ENCODE measurements at regions of chr15 and their contacts with region 1.

Region 1: GRCh38 chr15:82999905-83000671 is 11.4 kb downstream of the C15orf40 start:
- DNase-seq: no peak
- H3K4me3 ChIP-seq: peak overlapping the region; percentile 39
- CTCF ChIP-seq: peak; percentile 25

Region 2: DNA sequence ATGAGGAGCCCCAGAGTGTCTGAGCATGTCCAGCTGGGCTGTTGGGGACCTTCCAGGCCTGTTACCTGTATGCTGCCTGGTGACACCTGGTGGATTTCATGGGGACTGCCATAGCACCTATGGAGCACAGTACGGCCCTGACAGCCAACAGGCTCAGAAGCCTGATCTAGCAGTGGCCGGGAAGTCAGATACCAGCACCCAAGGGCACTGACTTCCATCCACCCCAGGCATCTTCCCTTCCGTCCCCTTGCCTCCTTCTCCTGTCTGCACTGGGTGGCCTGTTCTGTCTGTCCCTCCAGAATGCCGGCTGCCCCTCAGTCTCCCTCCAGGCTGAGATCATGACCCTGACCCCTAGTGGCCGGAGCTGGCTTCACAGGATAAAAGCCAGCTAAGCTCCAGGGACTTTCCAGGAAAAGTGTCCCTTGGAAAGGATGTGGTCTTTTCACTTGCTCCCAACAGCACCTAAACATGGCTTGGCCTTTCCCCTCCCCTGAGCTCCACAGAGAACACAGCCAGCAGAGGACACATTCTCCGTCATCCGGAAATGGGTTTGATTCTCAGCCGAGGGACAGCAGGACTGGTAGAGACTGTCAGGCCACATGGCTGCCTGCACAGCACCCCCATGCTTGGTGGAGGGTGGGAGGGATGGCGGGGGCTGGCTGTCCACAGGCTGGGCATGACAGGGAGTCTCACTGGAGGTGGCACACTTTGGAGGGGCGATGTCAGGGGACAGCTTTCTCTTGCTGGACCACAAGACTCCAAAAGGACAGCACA is 469.3 kb before region 1 on chr15:
- CTCF ChIA-PET with region 1: interaction called, 21 read pairs
- POLR2A ChIA-PET with region 1: interaction called, 3 read pairs
- DNase-seq: no peak
- H3K4me3 ChIP-seq: peak overlapping the region; percentile 20; the same call in 1 of the 2 replicates
- CTCF ChIP-seq: peak; percentile 86

Region 3: DNA sequence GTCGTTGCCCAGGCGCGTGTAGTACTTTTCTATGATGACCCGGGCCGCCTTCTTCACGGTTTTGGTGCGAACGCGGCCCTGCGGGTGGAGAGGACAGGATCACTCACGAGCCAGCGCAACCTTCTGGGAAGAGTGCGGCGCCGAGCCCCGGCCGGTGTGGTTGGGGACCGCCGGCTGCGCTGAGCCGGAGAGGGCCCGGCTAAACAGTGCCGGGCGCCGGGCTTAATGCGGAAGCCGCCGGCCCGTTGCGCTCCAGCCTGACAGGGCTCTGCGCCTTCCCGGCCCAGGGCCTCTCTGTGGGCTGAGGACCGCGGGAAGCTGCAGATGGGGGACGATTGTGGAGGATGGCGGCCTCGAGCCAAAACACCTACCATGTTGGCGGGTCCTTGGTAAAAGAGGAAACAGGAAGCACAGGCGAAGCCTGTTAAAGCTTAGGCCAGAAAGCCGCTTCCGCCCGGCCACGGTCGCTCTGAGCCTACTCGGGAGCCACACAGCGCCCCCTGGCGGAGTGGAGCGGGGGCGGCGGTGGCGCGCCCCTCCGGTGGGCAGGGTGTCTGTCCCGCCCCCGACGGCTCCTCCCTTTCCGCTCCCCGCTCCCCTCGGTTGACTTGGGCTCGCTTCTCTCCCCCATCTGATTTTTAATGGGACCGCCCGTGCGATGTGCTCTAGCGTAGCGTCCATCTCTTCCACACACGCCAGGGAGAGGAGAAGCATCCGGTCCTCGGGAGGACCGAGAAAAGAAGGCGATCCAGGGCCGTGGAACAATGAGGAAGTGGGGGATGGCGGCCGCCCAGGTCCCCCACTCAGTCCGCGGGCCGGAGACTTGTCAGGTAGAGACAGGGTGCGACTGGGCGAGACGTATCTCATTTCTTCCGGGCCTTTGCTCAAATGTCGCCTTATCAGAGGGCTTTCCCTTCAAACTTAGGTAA is 459.8 kb before region 1 on chr15 and contains the start of gene RPS17:
- CTCF ChIA-PET with region 1: interaction called, 29 read pairs
- POLR2A ChIA-PET with region 1: interaction called, 6 read pairs
- DNase-seq: peak; percentile 52
- H3K4me3 ChIP-seq: peak within 1 kb of the TSS; percentile 98
- CTCF ChIP-seq: peak; percentile 99

Region 4: GRCh38 chr15:82809404-82810060 is 190.6 kb before region 1 on chr15 and contains the start of gene WHAMM:
- CTCF ChIA-PET with region 1: interaction called, 10 read pairs
- POLR2A ChIA-PET with region 1: no interaction called
- DNase-seq: peak; percentile 94
- H3K4me3 ChIP-seq: peak within 1 kb of the TSS; percentile 84
- CTCF ChIP-seq: no peak

Region 5: GRCh38 chr15:82849556-82850512 is 150.3 kb before region 1 on chr15:
- CTCF ChIA-PET with region 1: interaction called, 28 read pairs
- POLR2A ChIA-PET with region 1: no interaction called
- DNase-seq: no peak
- H3K4me3 ChIP-seq: no peak overlapping the region
- CTCF ChIP-seq: peak; percentile 54

Region 6: GRCh38 chr15:82985688-82986441 is 14.2 kb before region 1 on chr15 and contains the start of gene RAMAC:
- CTCF ChIA-PET with region 1: interaction called, 27 read pairs
- POLR2A ChIA-PET with region 1: no interaction called
- DNase-seq: peak; percentile 67
- H3K4me3 ChIP-seq: peak within 1 kb of the TSS; percentile 99
- CTCF ChIP-seq: no peak

Region 7: GRCh38 chr15:83011271-83012075 is 11.4 kb after region 1 on chr15 and contains the start of gene C15orf40:
- CTCF ChIA-PET with region 1: interaction called, 79 read pairs
- POLR2A ChIA-PET with region 1: no interaction called
- DNase-seq: peak; percentile 24
- H3K4me3 ChIP-seq: peak within 1 kb of the TSS; percentile 90
- CTCF ChIP-seq: peak; percentile 90